ENCODE measurements at regions of chr12 and their contacts with region 1.

Region 1: DNA sequence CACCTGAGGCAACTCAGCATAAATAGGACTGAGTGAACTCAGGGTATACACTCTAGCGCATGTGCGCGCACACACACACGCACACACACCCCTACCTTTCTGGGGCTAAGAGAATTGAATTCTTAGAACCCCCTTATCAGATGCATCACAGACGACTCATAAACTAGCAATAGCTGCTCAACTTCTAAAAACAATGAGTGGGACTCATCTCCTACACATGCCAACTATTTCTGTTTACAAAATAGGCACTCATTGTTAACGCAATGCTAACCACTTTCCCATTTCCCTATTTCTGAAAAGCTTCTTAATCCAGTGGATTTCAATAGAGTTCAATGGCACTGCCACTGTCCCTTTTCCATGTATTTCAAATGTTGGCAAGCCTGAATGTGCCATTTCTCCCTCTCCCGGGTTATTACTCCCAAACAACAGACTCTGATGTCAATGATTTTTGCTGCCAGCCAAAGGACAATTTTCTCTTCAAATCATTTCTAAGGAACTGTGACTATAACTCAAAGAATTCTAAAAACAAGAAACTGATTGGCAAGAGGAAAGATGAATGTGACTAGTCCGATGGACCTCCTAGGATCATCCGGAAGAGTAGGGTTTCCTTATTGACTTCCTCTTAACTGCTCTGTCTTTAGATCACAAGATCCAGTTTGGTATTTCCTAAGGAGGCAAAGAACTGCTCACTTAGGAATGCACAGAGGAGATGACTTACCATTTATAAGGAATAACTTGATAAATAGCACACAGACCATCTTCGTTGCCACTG is 48.8 kb downstream of the SLC38A1 start:
- DNase-seq: peak; percentile 37 to 57 (median 45)
- ATAC-seq: peak; percentile 34
- H3K4me3 ChIP-seq: no peak overlapping the region
- H3K4me1 ChIP-seq: peaks cover 40% of the 10 kb centered on the region
- CTCF ChIP-seq: no peak

Region 2: GRCh38 chr12:46268590-46269558 is 48.8 kb after region 1 on chr12 and contains the start of gene SLC38A1:
- intact Hi-C with region 1: loop called in 1 of 2 experiments (anchors 5 kb)
- DNase-seq: peak; percentile 87 to 95 (median 91)
- ATAC-seq: peak; percentile 83
- H3K4me3 ChIP-seq: peak within 1 kb of the TSS; percentile 41
- H3K4me1 ChIP-seq: peaks cover 16% of the 10 kb centered on the region
- CTCF ChIP-seq: no peak
- total RNA-seq, gene SLC38A1: 116 to 157 (median 132) TPM

Region 3: GRCh38 chr12:46342562-46343033 is 122.5 kb after region 1 on chr12:
- intact Hi-C with region 1: no loop called
- DNase-seq: peak in 1 of 3 donors; percentile 62
- ATAC-seq: peak; percentile 47
- H3K4me3 ChIP-seq: no peak overlapping the region
- H3K4me1 ChIP-seq: no peaks in the 10 kb centered on the region
- CTCF ChIP-seq: no peak

Measured in mucosa of descending colon (tissue), 3 donors.